ENCODE measurements at regions of chr15 and their contacts with region 1.

Region 1: DNA sequence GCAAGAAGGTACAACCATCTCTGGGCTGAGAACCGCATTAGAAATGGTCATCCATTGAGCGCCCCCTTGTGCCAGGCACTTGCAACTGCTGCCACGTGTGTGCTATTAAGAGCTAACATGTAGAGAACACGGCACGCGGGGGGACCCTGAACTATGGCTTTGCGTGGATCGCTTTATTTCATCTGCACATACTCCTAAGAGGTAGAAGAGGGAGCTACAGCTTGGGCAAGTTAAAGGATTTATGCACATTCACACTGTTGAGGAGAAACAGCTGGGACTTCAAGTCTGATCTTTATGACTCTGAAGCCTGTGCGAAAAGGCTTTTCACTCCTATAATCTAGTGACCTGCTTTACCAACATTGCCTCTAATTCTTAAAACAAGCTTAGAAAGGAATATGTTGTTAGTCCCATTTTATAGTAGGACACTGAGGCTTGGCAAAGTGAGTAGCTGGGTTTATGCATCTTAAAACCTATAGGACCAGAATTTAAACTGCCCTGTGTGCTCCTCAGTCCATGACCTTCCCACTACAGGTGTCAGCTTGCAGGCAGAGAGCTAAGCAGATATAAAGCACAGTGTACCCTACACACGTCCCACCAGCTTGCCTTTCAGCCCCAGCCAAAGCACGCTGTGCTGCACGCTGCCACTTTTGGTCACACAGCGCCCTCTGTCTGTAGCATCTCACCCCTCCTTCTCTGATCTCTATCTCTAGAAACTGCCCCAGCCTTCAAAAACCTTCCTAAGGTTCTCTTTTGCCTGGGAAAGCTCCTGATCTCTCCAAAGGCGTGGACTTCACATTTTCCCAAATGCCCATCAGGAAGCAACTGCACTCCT is 57.8 kb downstream of the STARD5 start:
- DNase-seq: peak; percentile 88

Region 2: GRCh38 chr15:80977627-80978036 is 288.5 kb before region 1 on chr15:
- CTCF ChIA-PET with region 1: interaction called, 94 read pairs
- POLR2A ChIA-PET with region 1: interaction called, 6 read pairs
- DNase-seq: peak; percentile 85

Region 3: GRCh38 chr15:81098861-81099651 is 167.1 kb before region 1 on chr15:
- CTCF ChIA-PET with region 1: interaction called, 21 read pairs
- POLR2A ChIA-PET with region 1: no interaction called
- DNase-seq: no peak

Region 4: GRCh38 chr15:81111510-81112470 is 154.4 kb before region 1 on chr15:
- CTCF ChIA-PET with region 1: interaction called, 100 read pairs
- POLR2A ChIA-PET with region 1: interaction called, 3 read pairs
- DNase-seq: no peak

Region 5: DNA sequence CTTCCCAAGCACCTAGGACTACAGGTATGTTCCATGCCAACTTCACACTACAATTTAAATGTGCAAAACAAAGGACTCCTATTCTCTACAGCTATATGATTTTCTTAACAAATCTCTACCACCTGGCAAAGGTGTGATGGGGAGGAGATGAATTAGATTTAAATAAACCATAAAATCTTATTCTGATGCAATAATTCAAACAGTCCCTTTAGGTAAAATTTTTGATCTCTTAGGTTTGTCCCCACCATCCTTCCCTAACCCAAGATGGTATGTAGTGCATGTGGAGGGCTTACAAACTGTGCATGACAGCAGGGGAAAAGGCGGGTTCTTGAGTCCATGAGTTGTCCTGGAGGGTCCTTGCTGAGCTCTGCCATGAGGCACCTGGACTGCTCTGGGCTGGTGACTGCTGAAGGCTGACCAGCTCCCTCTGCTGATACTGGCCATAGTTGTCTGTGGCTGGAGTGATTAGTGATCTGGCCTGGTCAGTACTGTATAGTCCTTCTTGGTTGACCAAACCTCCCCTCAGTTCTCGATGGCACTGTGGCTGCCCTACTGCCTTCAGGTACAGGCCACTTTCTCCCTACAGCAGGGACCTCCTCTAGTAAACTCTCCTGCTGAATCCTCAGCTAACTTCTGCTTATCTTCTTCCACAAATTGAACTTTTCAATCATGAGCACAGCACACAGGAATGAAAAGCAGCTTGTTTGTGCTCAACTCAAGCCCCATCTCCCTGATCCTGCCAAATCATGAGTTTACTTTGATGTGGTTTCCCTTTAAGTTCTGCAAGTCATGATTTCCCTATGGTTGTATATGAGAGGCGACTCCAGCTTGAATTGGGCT is 102.0 kb before region 1 on chr15:
- CTCF ChIA-PET with region 1: interaction called, 107 read pairs
- POLR2A ChIA-PET with region 1: no interaction called
- DNase-seq: no peak

Region 6: DNA sequence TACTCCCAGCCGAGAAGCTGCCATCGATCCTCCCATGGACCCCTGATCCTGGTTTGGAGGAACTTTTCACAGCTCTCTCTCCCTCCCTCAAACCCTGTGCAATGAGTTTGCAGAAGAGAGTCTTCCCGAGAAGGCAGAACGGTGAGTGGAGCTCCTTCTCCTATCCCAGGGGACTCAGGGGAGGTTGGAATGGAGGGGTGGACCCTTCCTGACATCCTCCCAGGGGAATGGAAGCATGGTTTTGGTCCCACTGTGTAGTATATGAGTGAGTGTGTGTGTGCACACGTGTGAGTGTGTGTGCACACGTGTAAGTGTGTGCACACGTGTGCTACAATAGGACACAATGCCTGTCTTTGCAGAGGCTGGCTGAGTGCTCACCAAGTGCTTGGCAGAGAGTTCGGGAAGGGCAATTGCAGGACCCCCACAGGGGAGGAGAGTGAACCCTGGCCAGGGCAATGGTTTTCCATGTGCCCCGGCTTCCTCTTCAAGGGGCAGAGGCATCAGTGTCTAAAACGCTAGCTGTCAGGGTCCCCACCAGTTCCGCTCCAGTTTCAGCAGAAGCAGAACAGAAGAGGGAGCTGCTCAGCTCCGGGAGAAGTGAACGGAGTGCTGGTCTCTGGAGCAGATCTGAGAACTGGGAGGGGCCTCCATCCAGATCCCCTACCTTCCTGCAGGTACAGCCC is 83.3 kb before region 1 on chr15:
- CTCF ChIA-PET with region 1: interaction called, 12 read pairs
- POLR2A ChIA-PET with region 1: interaction called, 3 read pairs
- DNase-seq: no peak

Region 7: GRCh38 chr15:81373775-81374395 is 107.7 kb after region 1 on chr15 and contains the start of gene TMC3:
- CTCF ChIA-PET with region 1: no interaction called
- POLR2A ChIA-PET with region 1: no interaction called
- DNase-seq: no peak

Measured in HEK293T (cell line).